H1 (cell line): ENCODE measurements at regions of chr17 and their contacts with region 1.

Region 1: GRCh38 chr17:61335845-61336655 is 63.6 kb upstream of the TBX2 start:
- DNase-seq: no peak
- H3K4me3 ChIP-seq: no peak overlapping the region
- H3K27ac ChIP-seq: no peak overlapping the region
- H3K4me1 ChIP-seq: 0 out of 7 replicates have a peak, but pooled peaks cover 0 to 2% (median 0%) of the 10 kb centered on the region in 4 experiments
- H3K27me3 ChIP-seq: no peaks in the 10 kb centered on the region
- CTCF ChIP-seq: no peak
- EP300 ChIP-seq: no peak
- POLR2A ChIP-seq: no peak
- RAD21 ChIP-seq: no peak

Region 2: GRCh38 chr17:61349350-61349749 is 13.3 kb after region 1 on chr17:
- CTCF ChIA-PET with region 1: interaction called, 11 read pairs
- POLR2A ChIA-PET with region 1: no interaction called
- DNase-seq: no peak
- H3K4me3 ChIP-seq: no peak overlapping the region
- H3K27ac ChIP-seq: no peak overlapping the region
- H3K4me1 ChIP-seq: peaks cover 0 to 12% (median 7%) of the 10 kb centered on the region in 4 experiments; a peak in 3 of 7 replicates
- H3K27me3 ChIP-seq: no peaks in the 10 kb centered on the region
- CTCF ChIP-seq: peak in 2 of 3 experiments; percentile 23 to 46; a peak in 2 of 4 replicates
- EP300 ChIP-seq: no peak
- POLR2A ChIP-seq: no peak
- RAD21 ChIP-seq: peak; percentile 38 to 49; a peak in 3 of 4 replicates